ENCODE measurements at regions of chr13 and their contacts with region 1.

Region 1: GRCh38 chr13:78586706-78587105 is 16.6 kb downstream of the POU4F1 start:
- DNase-seq: peak; percentile 81
- ATAC-seq: peak; percentile 98
- H3K4me3 Mint-ChIP-seq: peak overlapping the region; percentile 74
- H3K27ac Mint-ChIP-seq: no peak overlapping the region
- H3K4me1 Mint-ChIP-seq: peaks cover 9% of the 10 kb centered on the region
- H3K27me3 Mint-ChIP-seq: peaks cover 63% of the 10 kb centered on the region
- CTCF ChIP-seq: peak; percentile 78

Region 2: DNA sequence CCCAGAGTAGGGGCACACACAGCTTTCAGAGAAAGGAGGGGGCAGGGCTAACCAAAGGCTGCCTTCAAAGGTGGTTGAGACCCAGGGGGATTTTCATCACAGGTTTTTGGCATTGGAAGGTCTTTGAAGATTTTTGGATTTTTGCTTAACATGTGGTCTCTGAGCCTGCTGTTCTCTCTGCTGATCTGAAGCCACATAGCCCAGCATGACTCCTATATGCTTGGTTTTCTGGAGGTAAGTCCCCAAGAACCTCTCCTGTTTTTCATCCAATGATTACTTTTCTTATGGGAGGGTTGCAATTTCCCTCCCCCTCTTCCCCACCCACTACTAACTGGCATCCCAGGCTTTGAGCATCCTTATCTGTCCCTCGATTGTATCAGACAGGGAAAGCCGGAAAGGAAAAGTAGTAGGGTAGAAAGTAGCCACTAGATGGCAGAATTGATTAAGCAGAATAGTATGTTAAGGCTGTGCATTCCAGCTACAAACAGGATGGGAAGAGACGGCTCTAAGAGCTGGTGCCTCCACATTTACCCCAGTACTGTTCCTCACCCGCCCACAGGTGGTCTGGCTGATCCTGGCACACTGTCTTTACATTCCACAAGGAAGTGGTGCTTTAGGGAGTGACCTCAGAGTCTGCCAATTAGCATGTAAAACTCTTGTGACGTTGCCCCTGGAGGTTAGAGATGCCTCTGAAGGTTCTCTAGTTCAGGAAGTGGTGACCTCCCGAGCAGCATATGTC is 449.1 kb before region 1 on chr13:
- CTCF ChIA-PET with region 1: interaction called, 31 read pairs
- POLR2A ChIA-PET with region 1: no interaction called
- DNase-seq: peak; percentile 46
- ATAC-seq: peak; percentile 99
- H3K4me3 Mint-ChIP-seq: no peak overlapping the region
- H3K27ac Mint-ChIP-seq: no peak overlapping the region
- H3K4me1 Mint-ChIP-seq: peaks cover 12% of the 10 kb centered on the region
- H3K27me3 Mint-ChIP-seq: no peaks in the 10 kb centered on the region
- CTCF ChIP-seq: peak; percentile 46; the same call in 1 of the 2 replicates

Region 3: DNA sequence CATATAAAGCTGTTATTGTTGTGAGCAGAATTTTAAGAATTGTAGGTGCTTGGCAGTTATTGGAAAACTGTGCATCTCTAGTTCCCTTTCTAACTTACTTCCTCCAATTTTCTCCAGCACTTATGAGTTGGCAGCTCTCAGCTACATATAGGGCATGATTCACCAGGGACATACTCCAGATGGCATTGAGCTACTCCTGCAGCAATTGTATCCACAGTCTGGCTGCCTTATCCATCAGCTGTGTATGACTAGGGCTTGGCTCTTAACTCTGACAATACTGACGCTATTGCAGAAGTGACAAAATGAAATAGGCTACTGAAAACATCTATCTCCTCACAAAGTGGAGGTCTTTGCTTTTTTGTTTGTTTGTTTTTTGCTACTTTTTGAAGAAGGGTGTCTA is 260.1 kb before region 1 on chr13:
- CTCF ChIA-PET with region 1: interaction called, 15 read pairs
- POLR2A ChIA-PET with region 1: no interaction called
- DNase-seq: no peak
- ATAC-seq: no peak
- H3K4me3 Mint-ChIP-seq: no peak overlapping the region
- H3K27ac Mint-ChIP-seq: no peak overlapping the region
- H3K4me1 Mint-ChIP-seq: no peaks in the 10 kb centered on the region
- H3K27me3 Mint-ChIP-seq: no peaks in the 10 kb centered on the region
- CTCF ChIP-seq: no peak

Region 4: DNA sequence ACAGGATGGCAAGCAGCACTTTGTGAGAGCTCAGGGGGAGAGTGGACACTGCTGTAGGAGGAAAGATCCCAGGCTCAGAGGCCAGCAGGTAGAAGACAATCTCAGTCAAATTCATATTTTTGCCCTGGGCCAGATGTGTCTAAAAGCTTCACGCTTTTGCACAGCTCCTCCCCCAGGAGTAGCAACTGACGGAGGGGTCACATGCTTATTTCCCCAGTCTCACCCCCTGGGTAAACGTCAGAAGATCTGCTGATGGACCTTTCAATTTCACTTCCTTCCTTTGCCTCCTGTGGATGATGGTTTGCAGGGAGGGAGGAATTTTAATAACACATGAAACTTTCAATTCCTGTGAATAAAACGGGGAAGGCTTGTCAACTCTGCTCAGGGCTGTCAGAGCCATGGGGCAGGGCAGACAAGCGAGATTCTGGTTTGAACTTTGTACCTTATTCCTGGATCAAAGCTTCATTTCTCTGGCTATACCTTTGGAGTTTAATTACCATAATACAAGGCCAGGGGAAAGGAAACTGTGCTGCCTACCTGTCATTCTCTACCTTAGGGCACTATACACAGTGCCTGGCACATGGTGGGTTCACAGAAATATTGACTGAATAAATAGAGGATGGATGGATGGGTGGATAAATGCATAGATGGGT is 24.3 kb before region 1 on chr13:
- CTCF ChIA-PET with region 1: interaction called, 12 read pairs
- POLR2A ChIA-PET with region 1: no interaction called
- DNase-seq: no peak
- ATAC-seq: no peak
- H3K4me3 Mint-ChIP-seq: no peak overlapping the region
- H3K27ac Mint-ChIP-seq: no peak overlapping the region
- H3K4me1 Mint-ChIP-seq: no peaks in the 10 kb centered on the region
- H3K27me3 Mint-ChIP-seq: no peaks in the 10 kb centered on the region; the same call in 1 of the 2 replicates
- CTCF ChIP-seq: no peak

Region 5: GRCh38 chr13:78603240-78603957 is 16.7 kb after region 1 on chr13 and contains the start of gene POU4F1:
- CTCF ChIA-PET with region 1: interaction called, 34 read pairs
- POLR2A ChIA-PET with region 1: interaction called, 5 read pairs
- DNase-seq: peak; percentile 93
- ATAC-seq: peak; percentile 59
- H3K4me3 Mint-ChIP-seq: peak within 1 kb of the TSS; percentile 78
- H3K27ac Mint-ChIP-seq: no peak within 1 kb of the TSS
- H3K4me1 Mint-ChIP-seq: peaks cover 65% of the 10 kb centered on the region
- H3K27me3 Mint-ChIP-seq: peaks cover 97% of the 10 kb centered on the region
- CTCF ChIP-seq: no peak
- total RNA-seq, gene POU4F1: 0.11 to 0.26 TPM (median 0.14 TPM) in 3 replicates

Region 6: DNA sequence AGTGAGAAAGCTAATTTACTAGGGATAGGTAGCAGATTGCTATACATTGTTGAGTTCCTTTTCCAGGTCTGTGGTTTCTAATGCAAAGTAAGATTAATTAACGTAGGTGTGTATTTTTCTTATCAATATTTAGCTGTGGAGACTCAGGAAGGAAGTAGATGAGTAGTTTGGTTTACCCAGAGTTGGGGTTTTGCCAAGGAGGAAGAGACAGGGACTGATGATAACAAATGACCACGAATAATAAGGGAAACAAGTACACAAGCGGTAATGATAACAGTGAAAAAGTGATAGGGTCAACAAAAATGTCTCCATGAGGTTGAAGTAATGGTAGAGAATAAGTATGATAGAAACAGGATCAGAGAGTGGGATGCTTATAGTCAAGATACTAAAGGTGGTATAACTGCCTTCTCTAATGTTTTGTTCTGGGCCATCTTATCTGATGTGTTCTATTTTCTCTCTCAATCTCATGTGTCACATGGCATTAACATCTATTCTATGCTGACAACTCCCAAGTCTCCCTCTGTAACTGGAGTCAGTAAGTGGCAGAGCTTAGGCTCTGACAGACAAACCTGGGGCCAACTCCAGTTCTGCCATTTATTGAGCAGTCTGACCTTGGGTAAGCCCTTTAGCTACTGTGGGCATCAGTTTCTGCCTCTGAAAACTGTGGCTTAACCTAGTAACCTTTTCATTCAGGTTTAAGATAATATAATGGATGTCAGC is 63.5 kb after region 1 on chr13:
- CTCF ChIA-PET with region 1: no interaction called
- POLR2A ChIA-PET with region 1: no interaction called
- DNase-seq: no peak
- ATAC-seq: no peak
- H3K4me3 Mint-ChIP-seq: no peak overlapping the region
- H3K27ac Mint-ChIP-seq: no peak overlapping the region
- H3K4me1 Mint-ChIP-seq: peaks cover 22% of the 10 kb centered on the region
- H3K27me3 Mint-ChIP-seq: peaks cover 4% of the 10 kb centered on the region; the same call in 1 of the 2 replicates
- CTCF ChIP-seq: no peak